Naive thymus-derived CD8-positive, alpha-beta T cell (primary cell): ENCODE measurements at regions of chr11 and their contacts with region 1.

Region 1: DNA sequence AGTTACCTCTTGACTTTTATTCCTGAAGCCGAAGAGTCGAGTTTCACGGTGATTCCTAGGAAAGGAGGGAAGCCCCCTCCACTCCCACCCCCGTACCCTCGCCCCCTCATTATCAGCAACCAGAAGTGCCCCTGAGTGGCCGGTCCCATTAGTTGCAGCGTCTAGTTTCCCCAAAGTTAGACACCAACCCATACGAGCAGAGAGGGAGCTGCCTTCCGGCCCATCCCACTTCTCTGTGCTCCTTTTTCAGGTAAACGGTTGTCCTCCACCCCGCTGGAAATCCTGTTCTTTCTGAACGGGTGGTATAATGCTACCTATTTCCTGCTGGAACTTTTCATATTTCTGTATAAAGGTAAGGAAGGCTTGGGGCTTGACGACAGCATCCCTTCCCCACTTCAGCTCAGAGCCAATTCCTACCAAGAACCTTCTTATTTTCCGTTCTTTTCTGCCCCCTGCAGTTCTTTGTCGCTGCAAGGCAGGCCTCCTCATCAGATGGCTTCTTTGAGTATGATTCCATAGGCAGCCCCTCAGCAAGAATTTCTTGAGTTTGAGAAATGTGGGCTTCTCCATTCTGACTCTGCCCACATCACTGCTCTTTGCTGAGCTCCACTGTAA is 701 bp downstream of the TMEM216 start:
- DNase-seq: peak in 5 of 10 donors; percentile 10 to 43 (median 32)
- ATAC-seq: peak; percentile 54 to 59
- H3K4me3 Mint-ChIP-seq: peak overlapping the region; percentile 90 to 98 (median 96)
- H3K27ac Mint-ChIP-seq: peak overlapping the region; percentile 94 to 99 (median 98)
- H3K4me1 Mint-ChIP-seq: peaks cover 12 to 35% (median 26%) of the 10 kb centered on the region in 4 donors
- H3K27me3 Mint-ChIP-seq: no peaks in the 10 kb centered on the region

Region 2: GRCh38 chr11:61411589-61411988 is 18.5 kb after region 1 on chr11:
- POLR2A ChIA-PET with region 1: no interaction called
- DNase-seq: no peak
- ATAC-seq: no peak
- H3K4me3 Mint-ChIP-seq: no peak overlapping the region
- H3K27ac Mint-ChIP-seq: peak overlapping the region in 4 of 10 donors; percentile 8 to 83 (median 50)
- H3K4me1 Mint-ChIP-seq: peaks cover 5 to 12% (median 11%) of the 10 kb centered on the region in 4 donors
- H3K27me3 Mint-ChIP-seq: no peaks in the 10 kb centered on the region

Region 3: DNA sequence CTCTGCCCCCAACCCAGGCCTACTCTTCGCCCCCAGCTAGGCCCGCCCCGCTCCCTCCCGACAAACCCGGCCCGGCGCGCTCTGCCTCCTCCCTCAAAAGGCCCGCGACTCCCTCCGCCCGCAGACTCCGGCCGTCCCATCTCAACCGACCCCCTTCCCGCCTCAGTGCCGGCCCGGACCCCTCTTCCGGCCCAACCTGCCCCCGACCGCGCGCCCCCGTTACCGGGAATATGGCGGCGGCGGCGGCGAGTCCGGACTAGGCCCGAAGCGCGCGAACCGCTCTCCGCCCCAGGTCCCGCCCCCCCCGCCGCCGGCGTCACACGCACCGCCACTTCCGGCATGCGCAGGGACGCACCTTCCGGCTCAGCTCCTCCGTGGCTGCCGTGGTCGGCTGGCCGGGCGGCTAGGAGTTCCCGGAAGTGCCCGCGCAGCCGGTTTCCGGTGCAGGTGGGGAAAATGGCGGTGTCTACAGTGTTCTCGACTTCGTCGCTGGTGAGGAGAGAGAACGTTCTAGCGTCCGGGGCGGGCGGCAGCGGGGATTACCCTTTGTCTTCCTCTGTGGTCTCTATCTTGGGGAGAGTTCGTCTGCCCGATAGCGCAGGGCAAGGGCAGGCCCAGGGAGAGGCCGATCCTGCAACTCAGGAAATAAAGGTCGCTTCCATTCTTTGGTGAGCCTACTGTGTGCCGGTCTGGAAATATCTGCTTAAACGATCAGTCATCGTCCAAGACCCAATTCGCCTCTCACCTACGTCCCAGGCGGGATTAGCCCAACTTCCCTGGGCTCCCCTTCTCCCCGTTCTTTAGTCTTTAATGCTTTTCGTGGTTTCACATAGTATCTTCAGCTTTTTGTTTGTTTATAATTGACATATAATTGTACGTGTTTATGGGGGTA is 36.8 kb after region 1 on chr11 and contains the starts of genes CPSF7 and SDHAF2:
- POLR2A ChIA-PET with region 1: interaction called, 22 read pairs
- DNase-seq: peak; percentile 95 to 98 (median 97)
- ATAC-seq: peak; percentile 89
- H3K4me3 Mint-ChIP-seq: peak within 1 kb of the TSS; percentile 93 to 99 (median 96)
- H3K27ac Mint-ChIP-seq: peak within 1 kb of the TSS; percentile 98 to 100 (median 99)
- H3K4me1 Mint-ChIP-seq: peaks cover 18 to 81% (median 70%) of the 10 kb centered on the region in 4 donors
- H3K27me3 Mint-ChIP-seq: no peaks in the 10 kb centered on the region
- polyA plus RNA-seq, gene CPSF7: 20.6 to 34.8 (median 26.0) TPM
- polyA plus RNA-seq, gene SDHAF2: 92.1 to 118 (median 97.8) TPM